ENCODE measurements at regions of chr22 and their contacts with region 1.

Region 1: GRCh38 chr22:43726322-43726721 is 85.8 kb downstream of the EFCAB6 start:
- H3K4me3 ChIP-seq: no peak overlapping the region
- H3K27ac ChIP-seq: peak overlapping the region; percentile 28; the same call in 1 of the 2 replicates
- H3K4me1 ChIP-seq: peaks cover 12% of the 10 kb centered on the region; the same call in 1 of the 2 replicates
- CTCF ChIP-seq: no peak

Region 2: GRCh38 chr22:43263645-43264514 is 462.4 kb before region 1 on chr22:
- CTCF ChIA-PET with region 1: no interaction called
- POLR2A ChIA-PET with region 1: no interaction called
- H3K4me3 ChIP-seq: peak overlapping the region; percentile 12
- H3K27ac ChIP-seq: no peak overlapping the region; the same call in 1 of the 2 replicates
- H3K4me1 ChIP-seq: peaks cover 9% of the 10 kb centered on the region
- CTCF ChIP-seq: no peak

Region 3: DNA sequence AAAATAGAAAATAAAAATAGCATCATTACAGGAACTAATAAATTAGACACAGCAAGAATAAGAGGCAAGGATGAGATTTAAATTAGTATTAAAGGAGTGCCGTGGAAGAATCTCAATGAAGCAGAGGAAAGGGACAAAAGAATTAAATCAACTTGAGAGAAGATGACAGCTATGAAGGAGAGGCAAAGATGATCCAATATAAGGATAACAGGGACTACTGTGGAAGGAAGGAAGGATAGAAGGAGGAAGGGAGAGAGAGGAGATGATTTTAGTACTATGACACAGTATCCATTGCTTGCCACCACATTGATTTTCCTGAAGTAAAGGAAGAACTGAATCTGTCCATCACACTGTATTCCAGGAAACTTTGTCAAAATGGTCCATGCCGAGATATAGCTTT is 12.2 kb before region 1 on chr22:
- CTCF ChIA-PET with region 1: no interaction called
- POLR2A ChIA-PET with region 1: interaction called, 11 read pairs
- H3K4me3 ChIP-seq: no peak overlapping the region
- H3K27ac ChIP-seq: no peak overlapping the region
- H3K4me1 ChIP-seq: no peaks in the 10 kb centered on the region
- CTCF ChIP-seq: no peak

Measured in HEK293 (cell line).